PC-9 (cell line): ENCODE measurements at regions of chr17 and their contacts with region 1.

Region 1: DNA sequence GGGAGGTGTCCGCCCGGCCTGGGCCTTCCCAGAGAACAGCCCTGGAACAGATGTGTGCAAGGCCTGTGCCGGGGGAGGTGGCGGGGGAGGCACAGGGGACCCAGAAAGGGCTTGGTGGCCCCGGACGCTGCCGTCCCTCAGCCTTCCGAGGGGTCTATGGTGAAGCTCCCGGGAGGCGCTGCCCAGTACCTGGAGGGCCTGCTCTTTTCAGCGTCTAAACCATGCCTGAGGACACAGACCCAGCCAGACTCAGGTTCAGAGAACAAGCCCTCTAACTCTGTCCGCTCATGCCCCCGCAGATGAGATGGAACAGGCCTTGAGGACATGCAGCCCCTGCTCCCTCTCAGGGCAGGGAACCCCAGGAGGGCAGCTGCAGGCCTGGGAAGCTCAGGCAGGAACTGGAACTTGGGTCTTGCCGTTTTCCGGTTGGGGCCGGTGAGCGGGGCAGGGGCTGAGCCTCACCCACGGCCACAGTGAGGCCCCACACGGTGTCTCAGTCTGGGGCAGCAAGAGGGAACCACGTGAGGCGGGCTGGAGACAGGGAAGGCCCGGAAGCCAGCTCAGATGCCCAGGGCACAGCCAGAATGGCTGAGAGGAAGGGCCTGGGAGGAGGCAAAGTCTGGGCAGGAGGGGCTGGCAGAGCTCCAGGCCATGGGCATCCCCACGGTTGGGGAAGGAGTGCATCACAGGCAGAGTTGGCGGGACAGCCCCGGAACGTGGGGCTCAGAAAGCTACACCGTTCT is 12.5 kb downstream of the SLC16A3 start:
- DNase-seq: peak in 1 of 2 experiments; percentile 79
- H3K4me3 ChIP-seq: no peak overlapping the region
- H3K27ac ChIP-seq: no peak overlapping the region
- H3K4me1 ChIP-seq: peaks cover 10% of the 10 kb centered on the region
- H3K27me3 ChIP-seq: no peaks in the 10 kb centered on the region
- CTCF ChIP-seq: no peak

Region 2: DNA sequence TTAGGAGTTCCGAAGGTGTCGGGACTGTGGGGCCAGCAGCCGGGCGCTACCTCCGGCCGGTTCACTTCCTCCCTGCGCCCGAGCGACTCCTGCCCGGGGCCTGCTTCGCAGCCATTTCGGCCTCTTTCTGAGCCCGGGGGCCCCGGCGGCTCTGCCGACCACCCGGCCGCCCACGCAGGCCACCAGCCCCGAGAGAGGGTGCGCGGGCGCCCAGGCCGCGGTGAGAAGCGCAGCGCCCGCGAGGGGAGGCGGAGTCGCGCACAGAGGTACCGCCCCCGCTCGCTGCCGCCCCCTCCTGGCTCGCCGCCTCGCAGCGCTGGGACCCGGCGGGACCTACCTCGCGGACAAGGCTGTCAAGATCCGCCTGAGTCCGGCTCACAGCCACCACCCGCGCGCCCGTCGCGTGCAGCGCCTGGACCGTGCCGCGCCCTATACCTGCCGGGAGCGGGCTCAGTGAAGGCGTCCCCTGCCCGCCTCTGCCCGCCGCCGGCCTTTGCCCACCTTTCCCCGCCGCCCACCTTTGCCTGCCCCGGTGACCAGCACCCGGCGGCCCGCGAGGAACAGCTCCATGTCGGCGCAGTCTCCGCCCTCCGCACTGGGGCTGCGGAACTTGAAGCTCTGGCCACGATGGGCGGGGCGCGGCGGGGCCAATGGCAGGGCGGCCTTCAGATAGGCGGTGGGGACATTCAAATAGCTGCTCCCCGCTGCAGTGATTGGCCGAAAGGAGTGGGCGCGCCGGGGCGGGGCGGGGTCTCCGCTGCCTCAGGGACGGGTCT is 204.1 kb before region 1 on chr17 and contains the start of gene DCXR:
- CTCF ChIA-PET with region 1: no interaction called
- POLR2A ChIA-PET with region 1: no interaction called
- intact Hi-C with region 1: loop called (anchors 10 kb)
- DNase-seq: peak; percentile 85 to 98
- H3K4me3 ChIP-seq: peak within 1 kb of the TSS; percentile 66
- H3K27ac ChIP-seq: no peak within 1 kb of the TSS
- H3K4me1 ChIP-seq: 0 out of 2 replicates have a peak, but pooled peaks cover 6% of the 10 kb centered on the region
- H3K27me3 ChIP-seq: no peaks in the 10 kb centered on the region
- CTCF ChIP-seq: peak; percentile 61
- total RNA-seq, gene DCXR: 120 and 129 TPM in 2 replicates

Region 3: DNA sequence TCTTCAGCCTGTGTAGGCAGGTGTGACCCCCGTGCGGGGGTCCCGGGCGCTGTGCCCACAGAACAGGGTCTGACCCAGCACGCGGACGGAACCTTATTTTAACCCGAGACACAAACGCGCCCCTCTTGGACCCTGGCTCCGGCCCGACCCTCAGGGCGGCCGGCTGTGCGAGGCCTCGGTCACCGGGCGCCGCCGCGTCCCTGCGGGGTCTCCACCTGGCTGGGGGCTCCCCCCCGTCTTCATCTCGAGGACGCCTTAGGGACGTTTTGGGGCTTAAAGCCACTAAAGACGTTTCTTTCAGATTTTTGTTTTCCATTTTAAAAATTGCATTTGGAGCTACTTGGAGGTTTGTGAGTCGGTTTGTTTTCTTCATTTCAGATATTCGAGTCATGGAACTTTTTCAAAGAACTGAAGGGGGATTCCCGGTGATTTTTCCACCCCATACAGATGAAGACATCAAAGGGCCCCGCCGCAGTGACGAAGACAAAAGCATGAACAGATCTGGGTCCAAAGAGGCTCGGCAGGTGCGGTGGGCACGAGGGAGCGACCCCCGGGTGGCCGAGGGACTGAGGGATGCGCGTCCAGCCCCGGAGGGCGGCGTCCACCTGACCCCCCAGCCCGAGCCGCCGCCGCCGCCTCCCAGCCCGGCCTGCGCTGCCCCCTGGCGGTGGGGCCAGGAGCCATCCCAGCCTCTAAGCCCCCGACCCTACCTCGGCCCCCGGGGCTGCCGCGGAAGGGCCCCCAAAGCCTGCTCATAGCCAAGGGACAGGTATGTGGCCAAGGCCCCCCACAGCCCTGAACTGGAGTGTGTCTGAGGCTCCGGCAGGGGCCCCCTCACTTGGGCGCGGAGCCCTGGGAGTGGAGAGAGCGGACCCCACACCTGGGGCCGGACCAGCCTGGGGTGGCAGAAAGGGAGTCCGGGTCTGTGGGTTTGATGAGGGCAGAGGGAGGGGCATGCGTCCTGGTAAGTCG is 79.9 kb after region 1 on chr17:
- CTCF ChIA-PET with region 1: no interaction called
- POLR2A ChIA-PET with region 1: interaction called, 4 read pairs
- intact Hi-C with region 1: loop called (anchors 2 kb)
- DNase-seq: peak in 1 of 2 experiments; percentile 34
- H3K4me3 ChIP-seq: no peak overlapping the region
- H3K27ac ChIP-seq: no peak overlapping the region
- H3K4me1 ChIP-seq: no peaks in the 10 kb centered on the region
- H3K27me3 ChIP-seq: 0 out of 2 replicates have a peak, but pooled peaks cover 6% of the 10 kb centered on the region
- CTCF ChIP-seq: peak; percentile 82